AG04450 (cell line): ENCODE measurements at regions of chr19 and their contacts with region 1.

Region 1: GRCh38 chr19:55467236-55468053 is 2.9 kb upstream of the C19orf85 start:
- DNase-seq: no peak
- H3K4me3 ChIP-seq: no peak overlapping the region
- H3K27ac ChIP-seq: no peak overlapping the region
- H3K27me3 ChIP-seq: peaks cover 3% of the 10 kb centered on the region
- CTCF ChIP-seq: peak; percentile 90

Region 2: GRCh38 chr19:55407800-55408532 is 59.5 kb before region 1 on chr19:
- CTCF ChIA-PET with region 1: interaction called, 13 read pairs
- POLR2A ChIA-PET with region 1: interaction called, 3 read pairs
- DNase-seq: peak; percentile 99
- H3K4me3 ChIP-seq: peak overlapping the region; percentile 83
- H3K27ac ChIP-seq: peak overlapping the region; percentile 100
- H3K27me3 ChIP-seq: no peaks in the 10 kb centered on the region
- CTCF ChIP-seq: no peak

Region 3: GRCh38 chr19:55484593-55485438 is 17.4 kb after region 1 on chr19 and contains the start of gene NAT14:
- CTCF ChIA-PET with region 1: interaction called, 77 read pairs
- POLR2A ChIA-PET with region 1: interaction called, 3 read pairs
- DNase-seq: no peak
- H3K4me3 ChIP-seq: peak within 1 kb of the TSS; percentile 77
- H3K27ac ChIP-seq: peak within 1 kb of the TSS; percentile 52
- H3K27me3 ChIP-seq: no peaks in the 10 kb centered on the region
- CTCF ChIP-seq: no peak
- polyA plus RNA-seq, gene NAT14: 19.4 and 30.6 TPM in 2 replicates

Region 4: DNA sequence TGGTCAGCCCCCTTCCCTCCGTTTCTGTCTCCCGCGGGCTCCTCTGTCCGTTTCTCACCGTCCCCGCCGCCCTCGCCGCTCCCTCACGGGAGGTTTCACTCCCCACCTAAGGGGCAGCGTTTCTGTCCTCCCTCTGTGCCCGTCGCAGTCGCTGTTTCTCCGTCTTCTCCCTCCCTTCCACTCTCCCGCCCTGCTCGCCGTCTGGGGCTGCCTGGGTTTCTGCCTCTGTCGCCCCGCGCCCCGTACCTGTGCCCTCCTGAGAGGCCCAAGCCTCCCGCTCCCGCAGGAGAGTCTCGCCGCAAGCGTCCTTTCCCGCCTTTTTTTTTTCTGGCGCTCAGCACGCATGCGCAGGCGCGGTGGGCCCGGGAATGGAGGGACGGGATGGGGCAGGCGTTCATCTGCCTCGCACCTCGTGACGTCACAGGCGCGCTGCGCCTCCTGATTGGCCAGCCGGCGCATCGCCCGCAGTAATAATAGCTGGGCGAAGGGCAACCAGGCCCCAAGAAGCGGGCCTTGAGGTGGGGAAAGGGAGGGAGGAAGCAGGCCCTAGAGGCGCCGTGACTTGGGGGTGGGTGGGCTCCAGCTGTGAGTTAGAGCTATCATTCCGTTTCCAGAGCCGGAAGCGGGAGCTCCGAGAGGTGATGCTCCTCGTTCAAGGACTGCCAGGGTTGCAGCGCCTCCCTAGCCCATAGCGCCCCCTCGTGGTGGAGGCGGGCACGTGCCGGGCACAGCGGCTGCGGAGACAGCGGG is 36.2 kb after region 1 on chr19:
- CTCF ChIA-PET with region 1: interaction called, 144 read pairs
- POLR2A ChIA-PET with region 1: interaction called, 5 read pairs
- DNase-seq: peak; percentile 80
- H3K4me3 ChIP-seq: peak overlapping the region; percentile 69
- H3K27ac ChIP-seq: no peak overlapping the region
- H3K27me3 ChIP-seq: no peaks in the 10 kb centered on the region
- CTCF ChIP-seq: peak; percentile 96

Region 5: DNA sequence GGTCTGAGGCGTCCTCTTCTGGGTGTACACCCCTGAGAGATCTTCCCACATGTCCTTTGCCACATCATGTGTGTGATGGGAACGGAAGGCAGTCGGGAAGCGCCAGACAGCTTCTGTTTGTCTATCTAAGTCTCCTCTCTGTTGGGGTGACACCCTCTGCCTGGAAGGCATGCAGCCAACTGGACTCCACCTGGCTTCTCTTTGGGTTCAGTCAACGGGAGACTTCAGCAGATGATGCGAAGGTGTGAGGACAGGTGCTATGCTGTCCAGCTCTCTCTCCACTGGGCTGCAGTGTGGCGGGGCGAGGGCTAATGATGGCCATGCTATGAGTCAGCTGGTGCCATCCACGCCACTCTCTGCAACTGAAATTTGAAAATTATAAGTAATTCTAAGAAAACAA is 92.2 kb after region 1 on chr19:
- CTCF ChIA-PET with region 1: no interaction called
- POLR2A ChIA-PET with region 1: no interaction called
- DNase-seq: no peak
- H3K4me3 ChIP-seq: no peak overlapping the region
- H3K27ac ChIP-seq: no peak overlapping the region
- H3K27me3 ChIP-seq: peaks cover 8% of the 10 kb centered on the region
- CTCF ChIP-seq: no peak

Region 6: GRCh38 chr19:55605207-55605636 is 137.8 kb after region 1 on chr19:
- CTCF ChIA-PET with region 1: interaction called, 17 read pairs
- POLR2A ChIA-PET with region 1: no interaction called
- DNase-seq: peak; percentile 94
- H3K4me3 ChIP-seq: peak overlapping the region; percentile 73
- H3K27ac ChIP-seq: peak overlapping the region; percentile 88
- H3K27me3 ChIP-seq: no peaks in the 10 kb centered on the region
- CTCF ChIP-seq: no peak

Region 7: GRCh38 chr19:55632463-55632834 is 165.0 kb after region 1 on chr19:
- CTCF ChIA-PET with region 1: interaction called, 19 read pairs
- POLR2A ChIA-PET with region 1: no interaction called
- DNase-seq: peak; percentile 95
- H3K4me3 ChIP-seq: no peak overlapping the region
- H3K27ac ChIP-seq: peak overlapping the region; percentile 11
- H3K27me3 ChIP-seq: no peaks in the 10 kb centered on the region
- CTCF ChIP-seq: peak; percentile 87